Thyroid gland (tissue), 4 donors: ENCODE measurements at regions of chr9 and their contacts with region 1.

Region 1: DNA sequence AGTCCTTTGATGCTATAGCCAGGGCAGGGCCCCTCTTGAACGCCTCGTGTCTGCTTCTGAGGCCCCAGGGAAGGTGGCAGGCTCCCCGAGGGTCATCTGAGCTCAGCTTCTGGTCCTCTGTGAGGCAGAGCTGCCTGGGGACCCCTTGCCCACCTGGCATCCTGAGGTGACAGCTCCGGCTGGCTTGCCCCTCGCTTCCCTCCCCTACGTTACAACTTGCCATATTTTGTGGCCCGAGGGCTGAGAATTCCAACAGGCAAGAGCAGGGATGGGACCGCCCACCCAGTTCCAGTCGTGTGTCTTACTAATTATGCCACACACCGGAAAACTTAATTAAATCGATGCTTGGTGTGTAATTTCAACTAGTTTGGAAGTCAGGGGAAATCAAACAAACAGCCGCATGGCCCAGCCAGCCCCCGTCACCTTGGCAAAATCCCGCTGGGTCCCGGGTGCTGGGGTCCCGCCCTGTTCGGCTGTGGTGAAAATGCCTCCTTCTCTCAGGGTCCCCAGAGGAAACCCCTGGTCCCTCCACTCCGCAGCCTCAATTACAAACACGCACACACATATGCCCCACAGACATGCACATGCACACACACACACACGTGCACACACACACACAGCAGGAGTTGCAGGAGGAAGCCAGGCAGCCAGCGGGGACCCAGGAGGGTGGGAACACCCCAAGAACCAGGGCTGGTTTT is 221.0 kb upstream of the IER5L start:
- DNase-seq: peak in 1 of 2 donors; percentile 0
- H3K4me3 ChIP-seq: no peak overlapping the region
- H3K27ac ChIP-seq: no peak overlapping the region
- H3K4me1 ChIP-seq: peaks cover 11 to 23% of the 10 kb centered on the region in 2 donors
- H3K27me3 ChIP-seq: no peaks in the 10 kb centered on the region
- CTCF ChIP-seq: no peak
- POLR2A ChIP-seq: no peak

Region 2: DNA sequence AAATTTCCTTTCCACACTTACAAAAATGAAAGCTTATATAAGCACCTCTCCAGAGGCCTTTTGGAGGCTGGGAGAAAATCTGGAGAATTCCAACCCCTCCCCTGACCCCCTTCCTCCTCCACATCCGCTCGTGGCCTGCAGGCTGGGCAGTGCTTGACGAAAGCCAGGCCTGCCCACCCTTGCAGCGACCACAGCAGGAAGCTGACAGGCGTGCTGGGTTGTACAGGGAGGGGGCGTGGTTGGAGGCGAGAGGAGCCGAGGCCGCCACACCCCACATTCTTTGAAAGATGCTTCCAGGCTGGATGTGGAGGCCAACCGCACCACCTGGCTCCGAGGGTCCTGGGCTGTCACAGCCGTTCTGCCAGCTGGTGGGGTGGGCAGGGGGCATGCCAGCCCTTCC is 173.3 kb before region 1 on chr9:
- intact Hi-C with region 1: no loop called
- DNase-seq: peak; percentile 19 to 28
- H3K4me3 ChIP-seq: no peak overlapping the region
- H3K27ac ChIP-seq: no peak overlapping the region
- H3K4me1 ChIP-seq: peaks cover 0 to 10% of the 10 kb centered on the region in 2 donors
- H3K27me3 ChIP-seq: no peaks in the 10 kb centered on the region
- CTCF ChIP-seq: no peak
- POLR2A ChIP-seq: no peak

Region 3: DNA sequence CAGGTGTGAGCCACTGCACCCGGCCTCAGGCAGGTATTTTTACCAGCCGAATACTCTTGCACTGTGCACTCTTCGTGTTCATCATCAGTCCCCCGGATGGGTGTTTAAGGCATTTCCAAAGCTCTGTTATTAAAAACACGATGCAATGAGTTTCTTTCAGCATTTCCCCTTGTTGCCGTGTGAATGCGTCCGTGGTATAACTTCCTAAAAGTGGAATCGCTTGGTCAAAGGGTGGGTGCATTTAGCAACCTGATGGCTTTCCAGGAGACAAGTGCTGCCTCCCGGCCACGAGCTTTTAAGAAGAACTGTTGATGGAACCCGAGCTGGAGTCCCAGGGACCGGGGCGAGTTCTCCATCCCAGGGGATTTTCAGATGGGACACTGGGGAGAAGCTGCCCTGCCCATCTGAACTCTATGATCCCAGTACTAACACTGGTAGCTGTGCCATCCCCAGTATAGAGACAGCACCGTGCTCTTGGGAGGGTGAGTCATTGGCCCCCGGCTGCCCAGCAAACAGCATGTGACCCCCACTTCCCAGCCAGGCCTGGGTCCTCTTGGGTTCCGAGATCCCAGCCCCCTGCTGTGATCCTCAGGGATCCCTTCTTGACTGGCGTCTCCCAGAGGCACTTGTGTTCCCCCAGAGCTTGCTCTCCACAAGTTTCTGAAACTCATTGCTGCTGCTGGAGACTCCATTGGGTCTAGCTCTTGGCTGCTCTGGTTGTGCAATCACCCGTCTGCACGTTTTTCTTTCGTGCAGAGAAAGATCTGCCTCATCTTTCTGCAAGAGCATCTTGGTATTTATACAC is 51.6 kb before region 1 on chr9:
- intact Hi-C with region 1: loop called (anchors 5 kb)
- DNase-seq: no peak
- H3K4me3 ChIP-seq: no peak overlapping the region
- H3K27ac ChIP-seq: no peak overlapping the region
- H3K4me1 ChIP-seq: peaks cover 11 to 25% of the 10 kb centered on the region in 2 donors
- H3K27me3 ChIP-seq: peaks cover 6% of the 10 kb centered on the region
- CTCF ChIP-seq: no peak
- POLR2A ChIP-seq: no peak

Region 4: DNA sequence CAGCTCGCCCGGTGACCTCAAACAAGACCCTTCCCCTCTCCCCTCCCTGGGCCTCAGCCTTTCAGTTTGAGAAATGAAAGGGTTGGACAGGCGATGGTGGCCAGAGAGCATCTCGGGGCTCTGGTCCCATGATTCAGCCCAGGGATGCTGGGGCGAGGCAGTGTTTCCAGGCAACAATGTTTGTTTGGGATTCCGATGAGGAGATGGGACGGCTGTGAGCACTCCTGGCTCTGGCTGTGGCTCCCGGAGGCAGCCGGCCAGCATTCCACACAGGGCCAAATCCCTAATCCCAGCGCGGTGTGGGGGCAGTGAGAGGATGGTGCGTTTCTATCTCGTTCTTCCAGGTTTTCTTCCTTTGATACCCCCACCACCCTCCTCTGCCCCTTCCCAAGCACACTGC is 932.5 kb after region 1 on chr9:
- intact Hi-C with region 1: loop called (anchors 5 kb)
- DNase-seq: no peak
- H3K4me3 ChIP-seq: no peak overlapping the region
- H3K27ac ChIP-seq: no peak overlapping the region
- H3K4me1 ChIP-seq: peaks cover 0 to 11% of the 10 kb centered on the region in 2 donors
- H3K27me3 ChIP-seq: no peaks in the 10 kb centered on the region
- CTCF ChIP-seq: no peak
- POLR2A ChIP-seq: no peak